ENCODE measurements at regions of chr18 and their contacts with region 1.

Region 1: GRCh38 chr18:10787293-10787901 is 261.6 kb downstream of the NAPG start:
- DNase-seq: peak; percentile 72
- H3K4me3 ChIP-seq: no peak overlapping the region
- H3K27ac ChIP-seq: no peak overlapping the region
- H3K4me1 ChIP-seq: no peaks in the 10 kb centered on the region
- H3K27me3 ChIP-seq: peaks cover 0 to 2% of the 10 kb centered on the region in 2 experiments
- CTCF ChIP-seq: peak; percentile 82 to 87
- POLR2A ChIP-seq: no peak

Region 2: DNA sequence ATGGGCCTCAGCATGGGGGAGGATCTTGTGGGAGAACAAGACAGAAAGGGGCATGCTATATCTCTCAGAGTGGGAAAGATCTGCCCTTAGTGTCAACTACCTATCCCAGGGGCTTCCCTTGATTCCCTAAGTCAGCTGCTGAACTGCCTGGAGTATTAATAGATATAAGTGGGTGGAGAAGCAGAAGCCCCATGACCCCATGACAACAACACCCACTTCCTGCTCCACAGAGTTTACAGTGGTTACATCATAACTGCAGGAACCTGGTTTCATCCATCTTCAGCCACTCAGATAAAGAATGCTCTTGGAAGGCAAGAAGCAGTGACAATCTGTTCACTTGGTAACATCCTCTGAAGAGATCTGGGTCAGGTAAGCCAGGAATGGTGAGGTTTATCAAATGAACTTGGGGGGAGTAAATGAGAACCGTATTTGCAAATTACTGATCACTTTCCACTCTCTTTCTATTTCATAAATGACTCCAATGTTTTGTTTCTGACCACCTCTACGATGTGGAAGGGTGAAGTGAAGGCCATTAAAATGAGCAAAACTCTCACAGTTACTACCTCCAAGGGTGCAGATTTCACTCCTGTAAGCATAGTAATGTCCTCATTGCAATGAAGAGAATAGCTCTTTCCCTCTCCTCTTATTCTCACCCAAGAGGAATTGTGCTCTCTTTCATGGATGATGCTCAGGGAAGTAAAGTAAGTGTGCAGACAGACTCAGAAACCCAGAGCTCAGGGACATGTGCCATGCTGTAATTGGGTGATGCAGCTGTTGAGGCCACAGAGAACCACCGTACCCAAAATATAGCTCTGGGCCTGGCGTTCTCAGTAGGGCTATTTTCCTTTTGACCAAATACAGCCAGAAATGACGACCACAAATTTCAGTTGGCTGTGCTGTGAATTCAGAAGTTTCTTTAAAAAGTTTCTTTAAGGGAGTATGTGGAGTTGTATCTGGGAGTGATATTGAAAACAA is 525.8 kb before region 1 on chr18:
- CTCF ChIA-PET with region 1: no interaction called
- POLR2A ChIA-PET with region 1: no interaction called
- dilution Hi-C with region 1: no loop called
- intact Hi-C with region 1: no loop called
- DNase-seq: no peak
- H3K4me3 ChIP-seq: no peak overlapping the region
- H3K27ac ChIP-seq: no peak overlapping the region
- H3K4me1 ChIP-seq: no peaks in the 10 kb centered on the region
- H3K27me3 ChIP-seq: peaks cover 3 to 11% of the 10 kb centered on the region in 2 experiments
- CTCF ChIP-seq: no peak
- POLR2A ChIP-seq: no peak

Region 3: GRCh38 chr18:10560450-10561045 is 226.8 kb before region 1 on chr18:
- CTCF ChIA-PET with region 1: interaction called, 35 read pairs
- POLR2A ChIA-PET with region 1: no interaction called
- dilution Hi-C with region 1: no loop called
- intact Hi-C with region 1: loop called (anchors 2 kb)
- DNase-seq: peak; percentile 69
- H3K4me3 ChIP-seq: no peak overlapping the region
- H3K27ac ChIP-seq: no peak overlapping the region
- H3K4me1 ChIP-seq: peaks cover 2% of the 10 kb centered on the region
- H3K27me3 ChIP-seq: no peaks in the 10 kb centered on the region
- CTCF ChIP-seq: peak; percentile 70 to 79
- POLR2A ChIP-seq: no peak

Region 4: GRCh38 chr18:10771053-10771709 is 16.2 kb before region 1 on chr18:
- CTCF ChIA-PET with region 1: interaction called, 13 read pairs
- POLR2A ChIA-PET with region 1: no interaction called
- dilution Hi-C with region 1: no loop called
- intact Hi-C with region 1: no loop called
- DNase-seq: no peak
- H3K4me3 ChIP-seq: no peak overlapping the region
- H3K27ac ChIP-seq: no peak overlapping the region
- H3K4me1 ChIP-seq: no peaks in the 10 kb centered on the region
- H3K27me3 ChIP-seq: no peaks in the 10 kb centered on the region
- CTCF ChIP-seq: no peak
- POLR2A ChIP-seq: no peak

Region 5: DNA sequence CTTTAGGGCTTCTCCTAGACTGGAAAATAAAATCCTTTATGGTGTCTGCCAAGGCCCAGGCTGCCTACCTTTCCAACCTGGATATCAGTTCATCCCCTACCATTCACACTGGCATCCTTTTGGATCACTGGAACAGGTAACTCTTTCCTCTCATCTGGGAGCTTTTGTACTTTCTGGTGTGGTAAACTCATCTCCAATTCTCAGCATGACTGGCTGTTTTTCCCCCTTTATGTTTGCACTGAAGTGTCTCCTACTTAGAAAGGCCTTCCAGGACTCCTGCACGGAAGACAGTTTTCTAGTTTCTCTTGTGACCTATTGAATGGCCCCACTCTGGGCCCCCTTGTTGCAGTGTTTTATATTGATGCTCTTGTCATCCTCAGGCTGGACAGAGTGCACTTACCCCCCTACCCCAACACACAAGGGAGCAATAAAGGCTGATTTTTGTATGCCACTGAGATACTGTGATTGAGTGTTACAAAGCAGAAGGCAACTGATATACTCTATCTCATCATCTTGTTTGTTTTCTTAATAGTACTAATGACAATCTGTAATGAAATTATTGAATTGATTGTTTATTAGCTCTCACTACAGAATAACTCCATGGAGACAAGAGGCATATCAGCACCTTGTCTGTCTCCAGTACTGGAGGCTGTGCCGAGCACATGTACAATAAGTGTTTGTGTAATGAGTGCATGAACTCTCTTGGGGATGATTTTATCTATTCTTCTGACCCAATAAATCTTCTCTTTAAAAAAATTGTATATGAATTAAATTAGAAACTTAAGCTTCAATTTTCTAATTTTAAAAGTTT is 232.1 kb after region 1 on chr18:
- CTCF ChIA-PET with region 1: no interaction called
- POLR2A ChIA-PET with region 1: no interaction called
- dilution Hi-C with region 1: no loop called
- intact Hi-C with region 1: no loop called
- DNase-seq: no peak
- H3K4me3 ChIP-seq: no peak overlapping the region
- H3K27ac ChIP-seq: no peak overlapping the region
- H3K4me1 ChIP-seq: no peaks in the 10 kb centered on the region
- H3K27me3 ChIP-seq: no peaks in the 10 kb centered on the region
- CTCF ChIP-seq: no peak
- POLR2A ChIP-seq: no peak

Region 6: GRCh38 chr18:11149441-11150270 is 362.3 kb after region 1 on chr18 and contains the start of gene PIEZO2:
- CTCF ChIA-PET with region 1: interaction called, 106 read pairs
- POLR2A ChIA-PET with region 1: no interaction called
- dilution Hi-C with region 1: no loop called
- intact Hi-C with region 1: loop called (anchors 1 kb)
- DNase-seq: peak; percentile 29
- H3K4me3 ChIP-seq: peak within 1 kb of the TSS in 2 of 3 experiments; percentile 21 to 25
- H3K27ac ChIP-seq: no peak within 1 kb of the TSS
- H3K4me1 ChIP-seq: no peaks in the 10 kb centered on the region
- H3K27me3 ChIP-seq: peaks cover 44 to 47% of the 10 kb centered on the region in 2 experiments
- CTCF ChIP-seq: no peak
- POLR2A ChIP-seq: no peak
- total RNA-seq, gene PIEZO2: 5.0 and 11.2 TPM in 2 replicates

Region 7: GRCh38 chr18:11163665-11164064 is 376.3 kb after region 1 on chr18:
- CTCF ChIA-PET with region 1: interaction called, 40 read pairs
- POLR2A ChIA-PET with region 1: no interaction called
- dilution Hi-C with region 1: no loop called
- intact Hi-C with region 1: loop called (anchors 1 kb)
- DNase-seq: peak; percentile 36
- H3K4me3 ChIP-seq: no peak overlapping the region
- H3K27ac ChIP-seq: no peak overlapping the region
- H3K4me1 ChIP-seq: no peaks in the 10 kb centered on the region
- H3K27me3 ChIP-seq: peaks cover 0 to under 1% of the 10 kb centered on the region in 2 experiments
- CTCF ChIP-seq: peak; percentile 74 to 84
- POLR2A ChIP-seq: no peak

Region 8: GRCh38 chr18:11518788-11519685 is 731.6 kb after region 1 on chr18:
- CTCF ChIA-PET with region 1: interaction called, 5 read pairs
- POLR2A ChIA-PET with region 1: no interaction called
- dilution Hi-C with region 1: no loop called
- intact Hi-C with region 1: loop called (anchors 1 kb)
- DNase-seq: peak; percentile 39
- H3K4me3 ChIP-seq: no peak overlapping the region
- H3K27ac ChIP-seq: no peak overlapping the region
- H3K4me1 ChIP-seq: peaks cover 17% of the 10 kb centered on the region
- H3K27me3 ChIP-seq: no peaks in the 10 kb centered on the region
- CTCF ChIP-seq: peak; percentile 72 to 81
- POLR2A ChIP-seq: no peak